Activated T-helper 2 cell treated with anti-CD3 and anti-CD28 coated beads, Interferon-gamma antibody, Interleukin-2, Interleukin-4, amounts not matched to agents 10 μg/mL and 5 μg/mL and 100 μg/mL, durations not matched to agents 14 hours and 24 hours and 36 hours (primary cell): ENCODE measurements at regions of chrX and their contacts with region 1.

Region 1: DNA sequence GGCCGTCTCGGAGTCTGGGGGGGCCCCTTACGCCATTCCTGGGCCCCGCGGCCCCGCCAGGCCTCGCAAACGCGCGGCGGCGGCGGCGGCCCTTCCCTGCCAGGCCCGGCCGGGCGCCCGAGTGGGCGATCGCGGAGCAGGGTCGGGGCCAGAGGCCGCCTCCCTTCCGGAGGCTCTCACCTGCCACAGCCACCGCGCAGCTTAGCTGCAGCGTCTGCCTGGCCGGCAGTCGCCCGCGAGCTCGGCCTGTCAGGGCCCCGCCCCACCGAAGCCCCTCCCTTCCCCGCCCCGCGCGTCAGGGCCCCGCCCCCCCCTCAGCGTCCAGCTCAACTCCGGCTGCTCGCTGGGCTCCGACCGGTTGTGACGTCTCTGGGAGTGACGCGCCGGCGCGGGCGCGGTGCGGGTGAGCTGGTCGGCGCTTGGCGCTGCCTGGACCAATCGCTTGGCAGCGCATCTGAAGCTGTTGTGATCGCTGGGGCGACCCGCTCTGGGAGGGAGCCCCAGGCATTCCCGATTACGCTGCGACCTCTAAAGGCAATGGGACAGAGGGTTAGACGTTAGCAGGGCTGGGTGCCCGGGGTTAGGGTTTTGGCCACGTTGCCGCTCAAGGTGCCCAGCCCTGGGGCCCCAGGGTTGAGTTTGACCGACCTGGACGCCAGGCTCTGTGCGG is at the start of gene SLC10A3:
- DNase-seq: peak; percentile 86
- H3K4me3 Mint-ChIP-seq: peak within 1 kb of the TSS; percentile 89
- H3K27ac Mint-ChIP-seq: peak within 1 kb of the TSS; percentile 89
- H3K4me1 Mint-ChIP-seq: peaks cover 8% of the 10 kb centered on the region
- H3K27me3 Mint-ChIP-seq: no peaks in the 10 kb centered on the region
- total RNA-seq, gene SLC10A3: 17.5 and 18.3 TPM in 2 replicates

Region 2: GRCh38 chrX:154505734-154506133 is 15.2 kb after region 1 on chrX:
- intact Hi-C with region 1: no loop called
- DNase-seq: no peak
- H3K4me3 Mint-ChIP-seq: no peak overlapping the region
- H3K27ac Mint-ChIP-seq: no peak overlapping the region
- H3K4me1 Mint-ChIP-seq: no peaks in the 10 kb centered on the region
- H3K27me3 Mint-ChIP-seq: no peaks in the 10 kb centered on the region

Region 3: GRCh38 chrX:154515878-154516655 is 25.5 kb after region 1 on chrX and contains the start of gene FAM3A:
- intact Hi-C with region 1: loop called (anchors 1 kb)
- DNase-seq: peak; percentile 84
- H3K4me3 Mint-ChIP-seq: peak within 1 kb of the TSS; percentile 85
- H3K27ac Mint-ChIP-seq: peak within 1 kb of the TSS; percentile 86
- H3K4me1 Mint-ChIP-seq: peaks cover 14% of the 10 kb centered on the region
- H3K27me3 Mint-ChIP-seq: no peaks in the 10 kb centered on the region
- total RNA-seq, gene FAM3A: 39.2 and 39.8 TPM in 2 replicates

Region 4: GRCh38 chrX:154534862-154535670 is 44.5 kb after region 1 on chrX:
- intact Hi-C with region 1: loop called (anchors 5 kb)
- DNase-seq: peak; percentile 76
- H3K4me3 Mint-ChIP-seq: no peak overlapping the region
- H3K27ac Mint-ChIP-seq: peak overlapping the region; percentile 67
- H3K4me1 Mint-ChIP-seq: peaks cover 6% of the 10 kb centered on the region
- H3K27me3 Mint-ChIP-seq: no peaks in the 10 kb centered on the region